ENCODE measurements at regions of chr6 and their contacts with region 1.

Region 1: GRCh38 chr6:21804941-21805610 is 211.5 kb downstream of the SOX4 start:
- DNase-seq: no peak
- ATAC-seq: no peak
- H3K4me3 ChIP-seq: no peak overlapping the region
- H3K27ac ChIP-seq: no peak overlapping the region
- H3K4me1 ChIP-seq: no peaks in the 10 kb centered on the region
- H3K27me3 ChIP-seq: no peaks in the 10 kb centered on the region
- CTCF ChIP-seq: no peak
- EP300 ChIP-seq: no peak
- POLR2A ChIP-seq: no peak
- RAD21 ChIP-seq: no peak

Region 2: DNA sequence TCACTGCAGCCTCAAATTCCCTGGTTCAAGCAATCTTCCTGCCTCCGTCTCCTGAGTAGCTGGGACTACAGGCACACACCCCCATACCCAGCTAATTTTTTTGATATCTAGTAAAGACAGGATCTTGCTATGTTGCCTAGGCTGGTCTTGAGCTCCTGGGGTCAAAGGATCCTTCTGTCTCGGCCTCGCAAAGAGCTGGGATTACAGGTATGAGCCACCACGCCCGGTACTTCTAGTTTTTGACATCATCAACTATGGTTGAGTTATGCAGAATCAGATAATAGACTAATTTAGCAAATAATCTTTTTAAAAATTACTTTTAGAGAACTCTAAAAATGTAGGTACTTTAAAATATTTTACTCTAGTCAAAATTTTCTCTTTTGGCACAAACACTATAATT is 45.4 kb before region 1 on chr6:
- CTCF ChIA-PET with region 1: no interaction called
- POLR2A ChIA-PET with region 1: interaction called, 10 read pairs
- RAD21 ChIA-PET with region 1: no interaction called
- SMC1A ChIA-PET with region 1: no interaction called
- in situ Hi-C with region 1: no loop called
- intact Hi-C with region 1: no loop called
- DNase-seq: no peak
- ATAC-seq: no peak
- H3K4me3 ChIP-seq: no peak overlapping the region
- H3K27ac ChIP-seq: no peak overlapping the region
- H3K4me1 ChIP-seq: no peaks in the 10 kb centered on the region
- H3K27me3 ChIP-seq: no peaks in the 10 kb centered on the region
- CTCF ChIP-seq: no peak
- EP300 ChIP-seq: no peak
- POLR2A ChIP-seq: no peak
- RAD21 ChIP-seq: no peak

Region 3: GRCh38 chr6:21846541-21847451 is 41.7 kb after region 1 on chr6:
- CTCF ChIA-PET with region 1: no interaction called
- POLR2A ChIA-PET with region 1: no interaction called
- RAD21 ChIA-PET with region 1: no interaction called
- SMC1A ChIA-PET with region 1: no interaction called
- in situ Hi-C with region 1: no loop called
- intact Hi-C with region 1: no loop called
- DNase-seq: no peak
- ATAC-seq: peak; percentile 76
- H3K4me3 ChIP-seq: no peak overlapping the region
- H3K27ac ChIP-seq: no peak overlapping the region
- H3K4me1 ChIP-seq: peaks cover 4% of the 10 kb centered on the region; the same call in 1 of the 2 replicates
- H3K27me3 ChIP-seq: no peaks in the 10 kb centered on the region
- CTCF ChIP-seq: no peak
- EP300 ChIP-seq: no peak
- POLR2A ChIP-seq: no peak
- RAD21 ChIP-seq: no peak

Region 4: GRCh38 chr6:22221630-22222029 is 416.6 kb after region 1 on chr6:
- CTCF ChIA-PET with region 1: no interaction called
- POLR2A ChIA-PET with region 1: no interaction called
- RAD21 ChIA-PET with region 1: no interaction called
- SMC1A ChIA-PET with region 1: no interaction called
- in situ Hi-C with region 1: no loop called
- intact Hi-C with region 1: no loop called
- DNase-seq: no peak
- ATAC-seq: no peak
- H3K4me3 ChIP-seq: no peak overlapping the region
- H3K27ac ChIP-seq: no peak overlapping the region
- H3K4me1 ChIP-seq: no peaks in the 10 kb centered on the region
- H3K27me3 ChIP-seq: no peaks in the 10 kb centered on the region
- CTCF ChIP-seq: no peak
- EP300 ChIP-seq: no peak
- POLR2A ChIP-seq: no peak
- RAD21 ChIP-seq: no peak